Sigmoid colon (tissue), 7 donors: ENCODE measurements at regions of chr9 and their contacts with region 1.

Region 1: GRCh38 chr9:101398068-101398929 is at the starts of genes MRPL50 and ZNF189:
- DNase-seq: peak; percentile 99
- H3K4me3 ChIP-seq: peak within 1 kb of the TSS; percentile 57 to 77 (median 66)
- H3K27ac ChIP-seq: peak within 1 kb of the TSS; percentile 82 to 92 (median 88)
- H3K4me1 ChIP-seq: peaks cover 0 to 50% (median 37%) of the 10 kb centered on the region in 4 donors
- H3K27me3 ChIP-seq: no peaks in the 10 kb centered on the region
- CTCF ChIP-seq: no peak
- EP300 ChIP-seq: peak in 1 of 4 donors; percentile 9
- POLR2A ChIP-seq: peak; percentile 39 to 68
- total RNA-seq, gene MRPL50: 10.0 to 15.3 (median 12.3) TPM
- total RNA-seq, gene ZNF189: 21.2 to 26.0 (median 24.1) TPM

Region 2: GRCh38 chr9:101119206-101119819 is 279.0 kb before region 1 on chr9:
- intact Hi-C with region 1: no loop called
- DNase-seq: no peak
- H3K4me3 ChIP-seq: no peak overlapping the region
- H3K27ac ChIP-seq: no peak overlapping the region
- H3K4me1 ChIP-seq: no peaks in the 10 kb centered on the region
- H3K27me3 ChIP-seq: no peaks in the 10 kb centered on the region
- CTCF ChIP-seq: no peak
- EP300 ChIP-seq: no peak
- POLR2A ChIP-seq: no peak

Region 3: DNA sequence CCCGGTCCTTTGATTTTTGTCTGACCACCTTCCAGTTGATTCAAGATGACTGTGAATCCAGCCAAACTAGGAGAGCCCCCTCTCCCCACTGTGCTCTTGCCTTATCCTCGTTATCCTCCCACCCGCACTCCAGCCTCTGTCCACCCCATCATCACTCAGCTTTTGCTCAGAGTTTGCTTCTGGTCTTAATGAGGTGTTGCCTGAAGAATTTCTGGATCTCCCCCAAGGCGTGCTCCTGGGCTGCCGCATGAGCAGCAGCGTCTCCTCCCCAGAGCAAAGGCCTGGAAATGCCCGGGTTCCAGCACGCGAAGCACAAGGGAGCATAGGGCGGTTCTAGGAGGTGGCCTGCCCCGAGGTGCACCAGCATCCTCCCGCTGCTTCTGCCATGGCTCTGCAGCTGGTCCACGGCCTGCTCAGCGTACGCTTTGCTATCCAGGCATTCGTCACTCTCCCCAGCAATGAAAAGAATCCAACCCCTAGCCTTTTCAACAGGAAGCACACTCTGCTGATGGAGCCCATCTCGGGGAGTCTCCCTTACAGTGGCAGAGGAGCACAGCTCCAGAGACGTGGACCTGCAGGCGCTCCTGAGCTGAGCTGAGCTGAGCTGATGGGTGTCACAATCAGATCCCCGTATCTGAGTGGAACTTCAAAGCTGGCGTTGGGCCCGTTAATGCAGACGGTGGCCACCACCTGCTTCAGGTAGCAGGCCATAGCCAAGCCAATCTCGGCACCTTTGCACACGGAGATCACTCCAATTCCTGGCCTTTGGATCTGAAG is 64.2 kb before region 1 on chr9:
- intact Hi-C with region 1: no loop called
- DNase-seq: no peak
- H3K4me3 ChIP-seq: no peak overlapping the region
- H3K27ac ChIP-seq: no peak overlapping the region
- H3K4me1 ChIP-seq: no peaks in the 10 kb centered on the region
- H3K27me3 ChIP-seq: no peaks in the 10 kb centered on the region
- CTCF ChIP-seq: no peak
- EP300 ChIP-seq: no peak
- POLR2A ChIP-seq: no peak

Region 4: DNA sequence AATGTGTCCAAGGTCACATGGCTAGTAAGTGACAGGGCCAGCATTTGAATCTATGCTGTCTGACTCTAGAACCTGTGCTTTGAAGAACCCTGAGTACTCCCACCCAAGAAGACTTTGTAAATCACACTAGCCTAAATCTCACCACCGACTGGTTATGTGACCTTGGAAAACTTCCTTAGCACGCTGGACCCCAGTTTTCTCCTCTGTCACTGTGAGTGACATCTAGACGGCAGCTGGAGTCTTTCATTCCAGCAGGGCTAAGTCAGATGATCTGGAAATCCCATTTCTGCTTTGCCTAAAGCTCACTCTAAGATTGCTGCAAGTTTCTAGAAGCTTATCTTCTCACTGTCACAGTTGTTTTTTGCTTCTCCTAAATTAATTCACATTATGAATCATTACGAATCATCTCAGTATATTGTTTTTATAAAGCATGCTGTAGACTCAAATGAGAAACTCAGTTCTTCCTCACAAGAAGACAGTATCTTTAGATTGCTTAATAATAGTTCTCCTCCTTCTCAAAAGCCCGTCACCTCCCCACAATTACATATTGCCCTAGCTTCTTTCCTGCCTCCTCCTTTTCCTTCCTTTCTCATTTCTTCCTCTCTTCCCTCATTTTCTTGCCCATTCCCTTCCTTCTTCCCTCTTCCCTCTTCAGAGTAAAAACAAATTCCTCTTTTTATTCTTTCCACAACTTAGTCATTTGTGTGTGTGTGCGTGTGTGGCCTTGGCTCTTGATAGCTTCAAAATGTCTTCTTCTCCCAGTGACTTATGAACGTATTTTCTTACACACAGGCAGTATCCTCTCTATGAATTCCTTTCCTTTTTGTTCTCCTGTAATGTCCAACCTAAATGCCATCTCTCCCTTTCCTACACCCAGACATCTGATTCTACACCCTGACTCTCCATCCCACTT is 20.5 kb after region 1 on chr9:
- intact Hi-C with region 1: no loop called
- DNase-seq: no peak
- H3K4me3 ChIP-seq: no peak overlapping the region
- H3K27ac ChIP-seq: no peak overlapping the region
- H3K4me1 ChIP-seq: no peaks in the 10 kb centered on the region
- H3K27me3 ChIP-seq: no peaks in the 10 kb centered on the region
- CTCF ChIP-seq: no peak
- EP300 ChIP-seq: no peak
- POLR2A ChIP-seq: no peak

Region 5: GRCh38 chr9:101437806-101438232 is 39.5 kb after region 1 on chr9:
- intact Hi-C with region 1: loop called (anchors 2 kb)
- DNase-seq: peak; percentile 72
- H3K4me3 ChIP-seq: no peak overlapping the region
- H3K27ac ChIP-seq: peak overlapping the region in 2 of 4 donors; percentile 8 to 36
- H3K4me1 ChIP-seq: peaks cover 0 to 13% (median 2%) of the 10 kb centered on the region in 4 donors
- H3K27me3 ChIP-seq: no peaks in the 10 kb centered on the region
- CTCF ChIP-seq: no peak
- EP300 ChIP-seq: peak; percentile 43 to 97 (median 73)
- POLR2A ChIP-seq: no peak

Region 6: DNA sequence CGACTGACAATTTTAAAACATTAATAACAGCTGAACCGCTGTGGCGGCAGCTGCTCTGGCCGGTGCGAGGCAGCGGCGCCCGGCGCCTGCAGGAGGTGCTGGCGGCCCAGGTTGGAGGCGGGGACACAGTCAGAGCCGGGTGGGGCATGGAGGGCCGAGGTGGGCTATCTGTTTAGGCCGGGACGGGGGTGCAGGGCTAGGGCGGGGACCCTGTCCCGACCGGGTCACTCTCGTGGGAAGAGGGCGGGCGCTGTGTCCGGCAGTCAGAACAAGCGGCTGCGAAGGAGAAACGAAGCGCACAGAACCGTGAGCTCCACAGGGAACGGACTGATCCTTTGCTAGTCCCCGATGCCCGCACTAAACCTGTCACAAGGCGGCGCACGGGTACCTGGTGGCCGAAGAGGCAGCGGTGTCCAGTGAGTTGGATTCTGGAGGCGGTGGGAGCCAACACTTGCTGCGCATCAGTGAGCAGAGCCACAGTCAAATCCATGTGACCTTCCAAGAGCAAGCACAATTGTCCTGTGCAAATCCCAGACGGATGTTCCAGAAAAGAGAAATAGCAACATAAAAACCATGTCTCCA is 50.9 kb after region 1 on chr9:
- intact Hi-C with region 1: loop called (anchors 1 kb)
- DNase-seq: peak; percentile 79
- H3K4me3 ChIP-seq: peak overlapping the region; percentile 51 to 60 (median 57)
- H3K27ac ChIP-seq: peak overlapping the region; percentile 61 to 72 (median 72)
- H3K4me1 ChIP-seq: peaks cover 0 to 6% (median 0%) of the 10 kb centered on the region in 4 donors
- H3K27me3 ChIP-seq: no peaks in the 10 kb centered on the region
- CTCF ChIP-seq: peak; percentile 24 to 58 (median 49)
- EP300 ChIP-seq: no peak
- POLR2A ChIP-seq: no peak